IMR-90 (cell line): ENCODE measurements at regions of chr10 and their contacts with region 1.

Region 1: GRCh38 chr10:34758447-34758996 is 56.6 kb downstream of the PARD3 start:
- DNase-seq: peak; percentile 96
- ATAC-seq: peak; percentile 89
- H3K4me3 ChIP-seq: no peak overlapping the region; the same call in 1 of the 2 replicates
- H3K27ac ChIP-seq: no peak overlapping the region
- H3K4me1 ChIP-seq: peaks cover 5% of the 10 kb centered on the region
- H3K27me3 ChIP-seq: no peaks in the 10 kb centered on the region
- CTCF ChIP-seq: no peak
- POLR2A ChIP-seq: no peak
- RAD21 ChIP-seq: no peak

Region 2: GRCh38 chr10:34494012-34494411 is 264.5 kb before region 1 on chr10:
- CTCF ChIA-PET with region 1: no interaction called
- POLR2A ChIA-PET with region 1: no interaction called
- dilution Hi-C with region 1: no loop called
- in situ Hi-C with region 1: no loop called
- intact Hi-C with region 1: no loop called
- DNase-seq: peak; percentile 21
- ATAC-seq: no peak
- H3K4me3 ChIP-seq: no peak overlapping the region
- H3K27ac ChIP-seq: no peak overlapping the region
- H3K4me1 ChIP-seq: no peaks in the 10 kb centered on the region; the same call in 1 of the 2 replicates
- H3K27me3 ChIP-seq: no peaks in the 10 kb centered on the region
- CTCF ChIP-seq: no peak
- POLR2A ChIP-seq: no peak
- RAD21 ChIP-seq: no peak

Region 3: GRCh38 chr10:34740808-34741486 is 17.6 kb before region 1 on chr10:
- CTCF ChIA-PET with region 1: no interaction called
- POLR2A ChIA-PET with region 1: interaction called, 3 read pairs
- dilution Hi-C with region 1: no loop called
- in situ Hi-C with region 1: no loop called
- intact Hi-C with region 1: loop called (anchors 1 kb)
- DNase-seq: no peak
- ATAC-seq: no peak
- H3K4me3 ChIP-seq: no peak overlapping the region
- H3K27ac ChIP-seq: no peak overlapping the region
- H3K4me1 ChIP-seq: peaks cover 7% of the 10 kb centered on the region
- H3K27me3 ChIP-seq: no peaks in the 10 kb centered on the region
- CTCF ChIP-seq: no peak
- POLR2A ChIP-seq: no peak
- RAD21 ChIP-seq: no peak

Region 4: GRCh38 chr10:34801097-34801733 is 42.7 kb after region 1 on chr10:
- CTCF ChIA-PET with region 1: interaction called, 3 read pairs
- POLR2A ChIA-PET with region 1: no interaction called
- dilution Hi-C with region 1: no loop called
- in situ Hi-C with region 1: no loop called
- intact Hi-C with region 1: loop called (anchors 5 kb)
- DNase-seq: no peak
- ATAC-seq: no peak
- H3K4me3 ChIP-seq: no peak overlapping the region
- H3K27ac ChIP-seq: no peak overlapping the region
- H3K4me1 ChIP-seq: no peaks in the 10 kb centered on the region; the same call in 1 of the 2 replicates
- H3K27me3 ChIP-seq: no peaks in the 10 kb centered on the region
- CTCF ChIP-seq: no peak
- POLR2A ChIP-seq: no peak
- RAD21 ChIP-seq: no peak

Region 5: DNA sequence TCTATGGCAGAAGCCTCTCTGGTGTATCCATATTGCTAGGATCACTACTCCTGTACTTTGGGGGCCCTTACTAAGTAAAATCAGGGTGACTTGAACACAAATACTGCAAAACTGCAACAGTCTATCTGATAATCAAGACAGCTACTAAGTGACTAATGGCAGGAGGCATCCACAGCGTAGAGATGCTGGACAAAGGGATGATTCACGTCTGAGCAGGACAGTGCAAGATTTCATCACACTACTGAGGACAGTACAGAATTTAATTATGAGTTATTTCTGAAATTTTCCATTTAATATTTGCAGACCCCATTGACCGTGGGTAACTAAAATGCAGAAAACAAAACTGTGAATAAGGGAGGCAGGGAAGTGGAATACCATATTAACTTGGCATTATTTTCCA is 321.2 kb after region 1 on chr10:
- CTCF ChIA-PET with region 1: no interaction called
- POLR2A ChIA-PET with region 1: no interaction called
- dilution Hi-C with region 1: no loop called
- in situ Hi-C with region 1: no loop called
- intact Hi-C with region 1: no loop called
- DNase-seq: peak; percentile 89
- ATAC-seq: peak; percentile 92
- H3K4me3 ChIP-seq: no peak overlapping the region
- H3K27ac ChIP-seq: no peak overlapping the region
- H3K4me1 ChIP-seq: peaks cover 7% of the 10 kb centered on the region
- H3K27me3 ChIP-seq: no peaks in the 10 kb centered on the region
- CTCF ChIP-seq: no peak
- POLR2A ChIP-seq: no peak
- RAD21 ChIP-seq: no peak